ENCODE measurements at regions of chr1 and their contacts with region 1.

Region 1: GRCh38 chr1:77683160-77684148 is 996 bp upstream of the ZZZ3 start:
- DNase-seq: peak; percentile 79 to 95 (median 90)
- ATAC-seq: peak; percentile 75 to 82 (median 78)
- H3K4me3 ChIP-seq: peak overlapping the region; percentile 52 to 74
- H3K4me3 Mint-ChIP-seq: peak overlapping the region; percentile 82 to 91 (median 89)
- H3K27ac ChIP-seq: peak overlapping the region; percentile 78
- H3K27ac Mint-ChIP-seq: peak overlapping the region; percentile 94 to 97
- H3K4me1 ChIP-seq: peaks cover 17 to 24% of the 10 kb centered on the region in 2 experiments
- H3K4me1 Mint-ChIP-seq: peaks cover 41 to 53% (median 48%) of the 10 kb centered on the region in 3 donors
- H3K27me3 ChIP-seq: no peaks in the 10 kb centered on the region
- H3K27me3 Mint-ChIP-seq: no peaks in the 10 kb centered on the region

Region 2: DNA sequence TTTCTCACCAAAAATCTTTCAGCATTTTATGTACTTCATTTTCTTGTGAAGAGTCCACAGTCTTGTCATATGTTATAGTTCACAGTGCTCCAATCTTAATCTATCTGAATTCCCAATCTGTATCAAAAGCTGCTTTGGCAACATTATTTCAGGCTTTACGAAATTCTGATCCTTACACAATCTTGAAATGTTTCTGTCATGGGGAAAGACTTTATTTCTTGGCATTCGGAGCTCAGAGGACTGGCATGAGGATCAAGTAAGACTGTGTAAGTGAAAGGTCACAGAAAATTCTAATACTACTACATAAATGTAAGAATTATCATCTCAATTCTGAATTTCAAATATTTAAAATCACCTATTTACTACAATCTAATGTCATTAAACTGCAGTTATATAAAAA is 74.2 kb after region 1 on chr1:
- CTCF ChIA-PET with region 1: interaction called in 1 of 2 experiments, 10 read pairs
- POLR2A ChIA-PET with region 1: interaction called in 1 of 2 experiments, 3 read pairs
- DNase-seq: no peak
- ATAC-seq: no peak
- H3K4me3 ChIP-seq: no peak overlapping the region
- H3K4me3 Mint-ChIP-seq: peak overlapping the region; percentile 69 to 96 (median 93)
- H3K27ac ChIP-seq: no peak overlapping the region
- H3K27ac Mint-ChIP-seq: peak overlapping the region; percentile 59 to 75
- H3K4me1 ChIP-seq: peaks cover 13 to 18% of the 10 kb centered on the region in 2 experiments
- H3K4me1 Mint-ChIP-seq: peaks cover 48 to 53% (median 52%) of the 10 kb centered on the region in 3 donors
- H3K27me3 ChIP-seq: no peaks in the 10 kb centered on the region
- H3K27me3 Mint-ChIP-seq: no peaks in the 10 kb centered on the region

Region 3: DNA sequence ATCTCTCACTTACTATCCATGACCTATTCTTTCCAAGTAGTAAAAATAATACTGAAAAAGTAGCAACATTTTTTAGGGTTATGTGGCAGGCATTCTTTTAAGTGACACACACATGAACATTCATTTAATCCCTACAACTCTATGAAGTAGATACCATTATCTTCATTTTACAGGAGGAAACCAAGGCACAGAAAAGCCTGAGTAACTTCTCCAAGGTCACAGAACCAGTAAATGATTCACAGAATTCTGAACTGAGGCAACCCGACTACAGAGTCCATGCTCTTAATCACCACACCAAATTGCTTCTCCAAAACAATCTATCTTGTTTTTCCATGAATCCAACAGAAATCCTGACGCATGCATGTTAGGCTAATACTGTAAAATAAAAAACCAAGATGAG is 277.9 kb after region 1 on chr1:
- CTCF ChIA-PET with region 1: no interaction called
- POLR2A ChIA-PET with region 1: interaction called in 1 of 2 experiments, 10 read pairs
- DNase-seq: no peak
- ATAC-seq: no peak
- H3K4me3 ChIP-seq: no peak overlapping the region
- H3K4me3 Mint-ChIP-seq: no peak overlapping the region
- H3K27ac ChIP-seq: no peak overlapping the region
- H3K27ac Mint-ChIP-seq: no peak overlapping the region
- H3K4me1 ChIP-seq: no peaks in the 10 kb centered on the region
- H3K4me1 Mint-ChIP-seq: peaks cover 26 to 38% (median 31%) of the 10 kb centered on the region in 3 donors
- H3K27me3 ChIP-seq: no peaks in the 10 kb centered on the region
- H3K27me3 Mint-ChIP-seq: no peaks in the 10 kb centered on the region

Region 4: DNA sequence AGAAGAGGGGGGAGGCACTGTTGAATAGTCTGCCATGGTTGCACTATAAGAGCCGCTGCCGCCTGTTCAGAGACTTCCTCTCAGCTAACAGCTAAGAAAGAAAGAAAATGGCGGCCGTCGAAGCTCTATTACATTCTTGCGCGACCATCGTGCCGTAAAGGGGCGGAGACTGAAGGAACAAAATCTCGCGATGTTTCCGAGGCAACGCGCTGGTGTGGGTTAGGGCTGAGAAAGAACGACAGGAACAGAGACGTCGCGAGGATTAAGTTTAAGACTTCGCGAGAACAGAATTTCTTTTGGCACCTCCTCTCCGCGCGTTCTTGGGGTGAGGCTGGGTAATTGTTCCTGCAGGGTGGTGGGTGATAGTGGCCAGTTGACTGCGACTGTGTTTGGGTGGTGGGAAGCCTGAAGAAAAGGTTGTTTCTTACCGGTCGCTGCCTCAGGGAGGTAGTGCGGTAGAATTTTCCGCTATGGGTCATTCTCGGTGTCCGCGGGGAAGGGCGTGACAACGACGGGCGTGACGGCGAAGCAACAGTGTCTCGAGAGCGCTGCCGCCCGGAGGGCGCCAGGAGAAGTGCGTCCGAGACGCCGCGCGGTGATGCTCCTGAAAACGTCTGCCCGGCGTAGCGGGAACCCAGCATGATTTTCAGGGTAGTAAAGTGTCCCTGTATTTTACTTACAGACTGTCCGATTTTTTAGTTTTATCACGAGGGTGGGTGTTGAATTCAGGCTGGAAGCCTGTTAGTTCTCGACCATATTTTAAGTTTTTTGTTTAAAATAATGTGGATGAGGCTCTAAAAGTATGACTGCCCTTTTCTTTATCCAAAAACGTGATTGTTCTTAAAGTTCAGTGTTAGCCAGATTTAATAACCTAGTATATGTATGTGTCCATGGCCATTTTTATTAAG is 295.8 kb after region 1 on chr1 and contains the start of gene FUBP1:
- CTCF ChIA-PET with region 1: interaction called in 1 of 2 experiments, 12 read pairs
- POLR2A ChIA-PET with region 1: interaction called, 3 to 6 read pairs
- DNase-seq: peak; percentile 87 to 99 (median 95)
- ATAC-seq: peak; percentile 81 to 85 (median 82)
- H3K4me3 ChIP-seq: peak within 1 kb of the TSS; percentile 92 to 93
- H3K4me3 Mint-ChIP-seq: no peak within 1 kb of the TSS
- H3K27ac ChIP-seq: peak within 1 kb of the TSS; percentile 100
- H3K27ac Mint-ChIP-seq: no peak within 1 kb of the TSS
- H3K4me1 ChIP-seq: peaks cover 29 to 36% of the 10 kb centered on the region in 2 experiments
- H3K4me1 Mint-ChIP-seq: peaks cover 49 to 51% (median 51%) of the 10 kb centered on the region in 3 donors
- H3K27me3 ChIP-seq: no peaks in the 10 kb centered on the region
- H3K27me3 Mint-ChIP-seq: no peaks in the 10 kb centered on the region
- total RNA-seq, gene FUBP1: 180 to 224 (median 194) TPM